B cell (primary cell): ENCODE measurements at regions of chr6 and their contacts with region 1.

Region 1: DNA sequence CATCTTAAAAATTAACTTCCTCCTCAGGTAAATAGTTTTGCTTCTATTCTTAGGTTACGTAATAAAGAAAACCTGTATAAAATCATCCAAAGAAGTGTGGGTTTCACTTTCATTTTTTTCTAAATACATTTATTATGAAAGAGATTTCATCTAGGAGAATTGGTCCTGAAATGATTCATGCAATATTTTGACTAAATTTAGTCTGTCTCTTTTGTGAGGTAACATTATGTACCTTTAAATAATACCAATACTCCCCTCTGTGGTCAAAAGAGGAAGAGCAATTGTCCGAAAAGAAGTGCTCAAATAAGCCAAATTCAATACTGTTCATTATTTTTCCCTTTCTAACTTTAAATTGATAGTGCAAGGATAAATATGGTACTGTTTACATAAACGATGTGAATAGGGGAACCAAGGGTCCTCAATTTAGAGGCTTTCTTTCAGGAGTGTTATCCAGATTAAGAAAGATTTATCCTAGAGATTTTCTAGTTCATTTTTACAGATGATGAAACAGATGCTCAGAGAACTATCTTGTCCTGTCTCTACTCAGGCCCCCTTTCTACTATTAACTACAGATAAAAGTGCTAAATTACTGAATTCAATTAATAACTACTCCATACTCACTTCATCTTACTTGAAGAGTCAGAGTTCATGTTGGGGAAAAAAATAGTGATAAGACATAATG is 26.2 kb downstream of the CYP39A1 start:
- DNase-seq: peak; percentile 31
- ATAC-seq: no peak
- H3K4me3 ChIP-seq: no peak overlapping the region
- H3K4me3 Mint-ChIP-seq: no peak overlapping the region
- H3K27ac ChIP-seq: no peak overlapping the region
- H3K27ac Mint-ChIP-seq: no peak overlapping the region
- H3K4me1 ChIP-seq: no peaks in the 10 kb centered on the region
- H3K4me1 Mint-ChIP-seq: peaks cover 9% of the 10 kb centered on the region
- H3K27me3 ChIP-seq: peaks cover 0 to 4% (median 0%) of the 10 kb centered on the region in 4 experiments
- H3K27me3 Mint-ChIP-seq: peaks cover 18% of the 10 kb centered on the region
- CTCF ChIP-seq: peak; percentile 71

Region 2: GRCh38 chr6:46419576-46420002 is 206.8 kb before region 1 on chr6:
- CTCF ChIA-PET with region 1: no interaction called
- POLR2A ChIA-PET with region 1: no interaction called
- intact Hi-C with region 1: loop called (anchors 1 kb)
- DNase-seq: peak; percentile 40
- ATAC-seq: no peak
- H3K4me3 ChIP-seq: no peak overlapping the region
- H3K4me3 Mint-ChIP-seq: no peak overlapping the region
- H3K27ac ChIP-seq: no peak overlapping the region
- H3K27ac Mint-ChIP-seq: no peak overlapping the region
- H3K4me1 ChIP-seq: no peaks in the 10 kb centered on the region
- H3K4me1 Mint-ChIP-seq: no peaks in the 10 kb centered on the region
- H3K27me3 ChIP-seq: no peaks in the 10 kb centered on the region
- H3K27me3 Mint-ChIP-seq: peaks cover 7% of the 10 kb centered on the region
- CTCF ChIP-seq: peak; percentile 69

Region 3: DNA sequence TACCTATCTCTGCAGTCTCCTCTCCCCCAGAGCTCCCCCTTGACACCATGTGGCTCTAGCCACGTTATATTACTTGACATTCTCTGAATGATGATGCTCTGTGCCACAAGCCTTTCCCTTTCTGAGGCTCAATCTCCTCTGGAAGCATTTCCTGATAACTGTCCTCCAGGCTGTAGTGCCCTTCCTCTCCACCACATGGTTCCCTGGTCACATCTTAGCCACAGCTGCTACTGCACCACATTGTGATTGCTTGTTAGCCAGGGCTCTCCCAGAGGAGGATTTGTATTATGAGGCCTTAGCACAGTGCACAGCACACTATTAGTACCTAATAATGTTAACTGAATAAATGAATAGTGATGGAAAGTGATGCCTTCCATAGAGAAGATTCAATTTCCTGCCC is 71.2 kb before region 1 on chr6:
- CTCF ChIA-PET with region 1: no interaction called
- POLR2A ChIA-PET with region 1: no interaction called
- intact Hi-C with region 1: no loop called
- DNase-seq: no peak
- ATAC-seq: no peak
- H3K4me3 ChIP-seq: no peak overlapping the region
- H3K4me3 Mint-ChIP-seq: no peak overlapping the region
- H3K27ac ChIP-seq: no peak overlapping the region
- H3K27ac Mint-ChIP-seq: no peak overlapping the region
- H3K4me1 ChIP-seq: peaks cover 15 to 20% of the 10 kb centered on the region in 2 donors
- H3K4me1 Mint-ChIP-seq: peaks cover 19% of the 10 kb centered on the region
- H3K27me3 ChIP-seq: no peaks in the 10 kb centered on the region
- H3K27me3 Mint-ChIP-seq: peaks cover 3% of the 10 kb centered on the region
- CTCF ChIP-seq: no peak

Region 4: DNA sequence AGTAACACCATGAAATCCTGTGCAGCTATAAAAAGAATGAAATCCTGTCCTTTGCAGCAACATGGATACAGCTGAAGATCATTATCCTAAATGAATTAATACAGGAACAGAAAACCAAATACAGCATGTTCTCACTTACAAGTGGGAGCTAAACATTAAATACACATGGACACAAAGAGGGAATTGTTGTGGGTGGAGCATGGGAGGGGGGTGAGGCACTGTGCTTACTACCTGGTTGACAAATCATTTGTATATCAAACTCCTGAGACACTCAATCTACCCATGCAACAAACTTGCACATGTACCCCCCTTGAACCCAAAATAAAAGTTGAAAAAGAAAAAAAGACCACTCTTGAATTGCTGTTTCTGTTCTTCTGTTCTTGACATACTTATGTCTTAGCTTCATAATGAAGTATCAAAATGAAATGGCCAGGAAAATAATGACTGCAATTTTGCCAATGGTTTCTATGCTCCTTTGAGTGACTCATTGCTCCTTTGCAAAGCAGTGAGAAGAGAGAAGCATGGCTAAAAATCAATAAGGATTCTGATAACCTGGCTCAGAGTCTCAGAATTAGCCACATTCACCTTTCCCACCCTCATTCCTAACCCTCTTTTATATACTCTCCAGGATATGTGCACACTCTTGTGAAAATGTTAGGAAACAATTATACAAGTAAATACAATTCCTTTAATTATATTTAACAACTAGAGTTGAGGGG is 44.8 kb before region 1 on chr6:
- CTCF ChIA-PET with region 1: no interaction called
- POLR2A ChIA-PET with region 1: no interaction called
- intact Hi-C with region 1: no loop called
- DNase-seq: no peak
- ATAC-seq: no peak
- H3K4me3 ChIP-seq: no peak overlapping the region
- H3K4me3 Mint-ChIP-seq: no peak overlapping the region
- H3K27ac ChIP-seq: no peak overlapping the region
- H3K27ac Mint-ChIP-seq: no peak overlapping the region
- H3K4me1 ChIP-seq: no peaks in the 10 kb centered on the region
- H3K4me1 Mint-ChIP-seq: no peaks in the 10 kb centered on the region
- H3K27me3 ChIP-seq: no peaks in the 10 kb centered on the region
- H3K27me3 Mint-ChIP-seq: peaks cover 11% of the 10 kb centered on the region
- CTCF ChIP-seq: no peak